Mammary epithelial cell (primary cell): ENCODE measurements at regions of chr6 and their contacts with region 1.

Region 1: GRCh38 chr6:121305957-121306607 is 28.2 kb downstream of the TBC1D32 start:
- DNase-seq: peak; percentile 30
- H3K4me3 ChIP-seq: no peak overlapping the region
- H3K27ac ChIP-seq: no peak overlapping the region
- H3K4me1 ChIP-seq: peaks cover 14% of the 10 kb centered on the region
- H3K27me3 ChIP-seq: no peaks in the 10 kb centered on the region
- CTCF ChIP-seq: peak; percentile 70 to 76

Region 2: GRCh38 chr6:121222656-121223055 is 83.4 kb before region 1 on chr6:
- CTCF ChIA-PET with region 1: interaction called, 7 read pairs
- dilution Hi-C with region 1: no loop called
- in situ Hi-C with region 1: no loop called
- intact Hi-C with region 1: loop called (anchors 10 kb)
- DNase-seq: peak; percentile 39
- H3K4me3 ChIP-seq: no peak overlapping the region
- H3K27ac ChIP-seq: no peak overlapping the region
- H3K4me1 ChIP-seq: no peaks in the 10 kb centered on the region
- H3K27me3 ChIP-seq: no peaks in the 10 kb centered on the region
- CTCF ChIP-seq: peak in 1 of 2 donors; percentile 20

Region 3: DNA sequence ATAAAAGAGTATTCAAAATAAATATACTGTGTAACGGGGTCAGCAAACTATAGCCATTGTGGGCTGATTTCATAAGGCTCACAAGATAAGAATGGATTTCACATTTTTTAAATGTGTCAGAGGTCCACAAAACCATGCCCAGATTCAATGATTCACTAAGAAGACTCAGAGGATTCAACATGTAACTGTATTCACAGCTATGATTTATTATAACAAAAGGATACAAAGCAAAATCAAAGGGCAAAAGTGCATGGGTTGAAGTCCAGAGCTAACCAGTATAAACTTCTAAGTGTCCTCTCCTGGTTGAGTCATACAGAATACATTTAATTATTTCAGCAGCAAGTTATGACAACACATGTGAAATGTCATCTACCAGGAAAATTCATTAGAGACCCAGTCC is 21.0 kb before region 1 on chr6:
- CTCF ChIA-PET with region 1: no interaction called
- dilution Hi-C with region 1: no loop called
- in situ Hi-C with region 1: no loop called
- intact Hi-C with region 1: no loop called
- DNase-seq: peak; percentile 29
- H3K4me3 ChIP-seq: no peak overlapping the region
- H3K27ac ChIP-seq: no peak overlapping the region
- H3K4me1 ChIP-seq: no peaks in the 10 kb centered on the region
- H3K27me3 ChIP-seq: no peaks in the 10 kb centered on the region
- CTCF ChIP-seq: no peak

Region 4: DNA sequence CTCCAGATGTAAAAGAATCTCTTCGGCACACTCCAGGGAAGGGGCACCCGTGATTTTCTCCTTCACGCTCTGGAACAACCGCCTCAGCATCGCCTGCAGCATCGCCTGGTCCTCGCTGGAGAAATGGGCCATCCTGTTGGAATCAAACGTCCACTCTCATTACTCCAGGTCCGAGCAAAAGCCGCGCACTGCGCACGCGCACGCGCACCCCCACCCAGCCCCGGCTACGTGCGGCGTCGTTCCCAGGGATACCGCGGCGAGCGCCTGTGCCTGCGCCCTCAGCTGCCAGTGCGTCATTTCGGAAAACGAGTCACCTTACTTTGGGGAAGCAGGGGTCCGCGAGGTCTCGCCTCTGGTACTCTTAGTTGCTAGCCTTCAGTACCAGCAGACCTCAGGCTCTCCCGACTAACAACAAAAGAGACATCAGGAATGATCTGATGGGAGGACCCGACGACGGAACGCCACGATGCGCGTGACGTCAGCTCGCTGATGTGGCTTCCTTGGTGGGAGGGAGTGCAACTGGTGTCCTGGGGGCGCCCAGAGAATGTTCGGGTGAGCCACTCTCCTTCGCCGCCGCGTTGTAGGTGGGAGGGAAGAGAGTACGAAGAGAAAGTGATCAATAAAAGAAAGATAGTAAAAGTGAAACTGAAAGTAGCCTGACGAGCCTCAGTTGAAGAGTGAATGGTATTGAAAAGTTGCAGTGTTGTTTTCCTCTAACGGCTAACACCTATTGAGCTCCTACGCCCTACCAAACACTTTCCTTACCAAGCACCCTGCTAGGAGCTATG is 28.4 kb after region 1 on chr6 and contains the start of gene TBC1D32:
- CTCF ChIA-PET with region 1: no interaction called
- dilution Hi-C with region 1: no loop called
- in situ Hi-C with region 1: no loop called
- intact Hi-C with region 1: loop called (anchors 1 kb)
- DNase-seq: peak; percentile 87
- H3K4me3 ChIP-seq: peak within 1 kb of the TSS; percentile 56 to 69 (median 66)
- H3K27ac ChIP-seq: peak within 1 kb of the TSS; percentile 92
- H3K4me1 ChIP-seq: peaks cover 4% of the 10 kb centered on the region
- H3K27me3 ChIP-seq: no peaks in the 10 kb centered on the region
- CTCF ChIP-seq: no peak
- total RNA-seq, gene TBC1D32: 7.9 to 13.8 TPM

Region 5: DNA sequence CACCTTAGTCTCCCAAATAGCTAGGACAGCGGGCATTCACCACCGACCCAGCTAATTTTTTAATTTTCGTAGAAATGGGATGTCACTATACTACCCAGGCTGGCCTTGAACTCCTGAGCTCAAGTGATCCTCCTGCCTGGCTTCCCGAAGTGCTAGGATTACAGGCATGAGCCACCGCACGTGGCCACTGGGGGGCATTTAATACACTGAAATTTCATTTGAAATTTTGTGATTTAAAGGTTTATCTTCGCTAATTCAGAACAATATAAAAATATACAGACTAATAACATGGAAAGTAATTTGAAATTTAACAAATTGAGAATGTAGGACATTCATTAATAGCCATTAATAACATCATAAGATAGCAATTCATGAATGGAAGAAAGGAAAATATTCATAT is 48.7 kb after region 1 on chr6:
- CTCF ChIA-PET with region 1: no interaction called
- dilution Hi-C with region 1: no loop called
- in situ Hi-C with region 1: no loop called
- intact Hi-C with region 1: no loop called
- DNase-seq: no peak
- H3K4me3 ChIP-seq: no peak overlapping the region
- H3K27ac ChIP-seq: no peak overlapping the region
- H3K4me1 ChIP-seq: no peaks in the 10 kb centered on the region
- H3K27me3 ChIP-seq: peaks cover 2% of the 10 kb centered on the region
- CTCF ChIP-seq: peak; percentile 28 to 36